ENCODE measurements at regions of chr7 and their contacts with region 1.

Region 1: GRCh38 chr7:116305485-116306408 is 95.4 kb downstream of the TES start:
- DNase-seq: no peak

Region 2: DNA sequence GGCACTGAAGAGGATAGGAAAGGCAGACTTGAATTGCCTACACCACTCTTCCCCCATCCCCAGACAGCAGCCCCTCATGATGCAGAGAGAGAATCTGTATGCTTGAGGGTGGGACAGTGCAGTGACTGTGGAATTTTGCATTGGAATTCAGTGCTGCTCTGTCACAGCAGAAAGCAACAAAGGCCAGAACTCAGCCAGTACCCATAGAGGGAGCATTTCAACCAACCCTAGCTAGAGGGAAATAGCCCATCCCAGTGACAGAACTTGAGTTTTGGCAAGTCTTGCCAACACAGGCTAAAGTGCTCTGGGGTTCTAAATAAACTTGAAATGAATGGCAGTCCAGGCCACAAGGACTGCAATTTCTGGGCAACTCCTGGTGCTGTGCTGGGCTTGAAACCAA is 15.0 kb before region 1 on chr7:
- intact Hi-C with region 1: loop called in 1 of 2 experiments (anchors 1 kb)
- DNase-seq: no peak

Measured in posterior vena cava (tissue), 2 donors.